Heart left ventricle (tissue), 16 donors: ENCODE measurements at regions of chr11 and their contacts with region 1.

Region 1: GRCh38 chr11:25583596-25583995 is 748.3 kb upstream of the ANO3 start:
- DNase-seq: no peak
- ATAC-seq: no peak
- H3K4me3 ChIP-seq: no peak overlapping the region
- H3K27ac ChIP-seq: no peak overlapping the region
- H3K4me1 ChIP-seq: no peaks in the 10 kb centered on the region
- H3K27me3 ChIP-seq: no peaks in the 10 kb centered on the region
- CTCF ChIP-seq: no peak
- POLR2A ChIP-seq: no peak

Region 2: GRCh38 chr11:25612806-25613205 is 29.2 kb after region 1 on chr11:
- intact Hi-C with region 1: loop called in 1 of 10 experiments (anchors 2 kb)
- DNase-seq: no peak
- ATAC-seq: no peak
- H3K4me3 ChIP-seq: no peak overlapping the region
- H3K27ac ChIP-seq: no peak overlapping the region
- H3K4me1 ChIP-seq: no peaks in the 10 kb centered on the region
- H3K27me3 ChIP-seq: no peaks in the 10 kb centered on the region
- CTCF ChIP-seq: no peak
- POLR2A ChIP-seq: no peak

Region 3: DNA sequence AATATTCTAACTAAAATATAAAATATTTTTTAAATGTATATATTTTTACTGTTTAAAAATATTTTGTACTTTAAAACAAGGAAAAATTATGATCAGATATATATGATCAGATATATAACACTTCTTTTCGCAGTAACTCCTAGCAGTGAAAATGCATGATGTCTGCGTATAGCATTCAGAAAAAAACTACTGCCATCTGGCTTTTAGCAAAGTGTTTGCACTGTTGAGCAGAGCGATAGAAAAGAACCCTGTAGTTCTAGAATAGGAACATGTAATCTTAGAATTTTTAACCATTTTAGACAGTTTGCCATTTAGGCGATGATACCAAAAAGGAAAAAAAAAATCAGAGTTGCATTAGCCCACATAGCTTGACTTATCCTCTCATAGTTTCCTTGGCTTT is 377.9 kb after region 1 on chr11:
- intact Hi-C with region 1: no loop called
- DNase-seq: no peak
- ATAC-seq: no peak
- H3K4me3 ChIP-seq: no peak overlapping the region
- H3K27ac ChIP-seq: no peak overlapping the region
- H3K4me1 ChIP-seq: no peaks in the 10 kb centered on the region
- H3K27me3 ChIP-seq: no peaks in the 10 kb centered on the region
- CTCF ChIP-seq: peak in 5 of 12 donors; percentile 11 to 32 (median 25)
- POLR2A ChIP-seq: no peak